Activated CD8-positive, alpha-beta T cell treated with anti-CD3 and anti-CD28 coated beads for 36 hours (primary cell): ENCODE measurements at regions of chr20 and their contacts with region 1.

Region 1: DNA sequence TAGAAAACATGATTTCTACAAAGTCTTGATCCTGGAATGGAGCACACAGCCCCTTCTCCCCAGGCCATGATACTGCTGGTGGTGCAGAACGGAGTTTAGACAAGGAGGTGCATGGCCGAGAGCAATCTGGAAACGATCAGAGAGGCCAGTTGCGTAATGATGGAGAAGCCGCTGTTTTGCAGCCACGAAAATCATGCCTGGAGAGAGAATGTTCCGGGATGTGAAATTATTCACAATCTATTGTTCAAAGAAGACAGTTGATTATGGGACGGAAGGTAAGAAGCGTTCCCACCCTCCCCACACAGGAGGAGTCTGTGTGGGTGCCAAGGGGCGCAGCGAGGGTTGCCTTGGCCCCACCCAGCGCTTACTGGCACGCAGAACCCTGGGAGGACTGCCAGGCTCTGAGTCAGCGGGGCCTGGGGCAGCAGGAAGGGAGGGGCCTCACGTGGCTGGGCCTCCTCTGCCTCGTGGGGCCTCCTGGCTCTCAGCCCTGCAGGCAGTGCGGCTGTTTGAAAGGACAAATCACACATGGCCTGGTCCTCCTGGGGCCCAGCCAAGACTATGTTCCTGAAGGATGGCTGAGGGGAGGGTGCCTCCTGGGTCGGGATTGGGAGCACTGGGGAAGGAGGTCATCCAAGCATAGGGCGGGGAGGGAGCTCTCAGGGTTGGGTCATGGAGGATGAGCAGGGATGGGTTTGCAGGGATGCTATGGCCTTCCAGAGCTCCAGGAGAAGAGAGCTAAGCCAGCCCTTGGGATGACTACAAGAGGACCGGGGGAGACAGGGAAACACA is 8.7 kb upstream of the AP5S1 start:
- DNase-seq: peak; percentile 95
- ATAC-seq: peak; percentile 88
- H3K4me3 Mint-ChIP-seq: peak overlapping the region; percentile 74
- H3K27ac Mint-ChIP-seq: peak overlapping the region; percentile 94
- H3K4me1 Mint-ChIP-seq: peaks cover 69% of the 10 kb centered on the region
- H3K27me3 Mint-ChIP-seq: no peaks in the 10 kb centered on the region
- CTCF ChIP-seq: no peak

Region 2: DNA sequence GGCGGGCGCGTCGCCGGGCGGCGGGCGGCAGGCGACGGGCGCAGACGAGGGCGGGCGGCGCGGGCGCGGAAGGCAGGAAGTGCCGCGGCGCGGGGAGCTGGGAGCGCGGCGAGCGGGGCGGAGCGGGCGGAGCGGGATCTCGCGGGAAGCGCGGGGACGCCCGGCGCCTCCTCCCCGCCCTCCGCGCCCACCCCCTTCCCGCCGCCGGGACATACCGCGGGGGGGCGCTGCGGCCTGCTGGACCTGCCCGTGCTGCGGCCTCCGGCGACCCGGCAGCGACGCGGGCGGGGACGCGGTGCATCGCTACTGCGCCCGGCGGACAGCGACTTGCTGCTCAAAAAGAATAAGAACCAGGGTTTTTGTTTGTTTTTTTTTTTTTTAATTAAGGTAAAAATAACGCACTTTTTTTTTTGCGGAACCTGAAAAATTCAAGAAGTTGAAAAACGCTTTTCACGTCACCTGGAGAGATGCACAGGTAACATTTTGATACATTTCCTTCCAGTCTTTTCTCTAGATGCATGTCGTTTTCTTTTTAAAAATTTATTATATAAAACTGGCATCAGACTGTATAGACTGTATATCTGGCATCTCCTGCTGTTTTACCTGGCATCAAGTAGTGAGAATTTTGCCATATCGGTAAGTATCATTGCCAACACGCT is 24.9 kb before region 1 on chr20 and contains the start of gene CENPB:
- CTCF ChIA-PET with region 1: interaction called, 25 read pairs
- POLR2A ChIA-PET with region 1: interaction called, 31 read pairs
- intact Hi-C with region 1: no loop called
- DNase-seq: peak; percentile 89
- ATAC-seq: peak; percentile 92
- H3K4me3 Mint-ChIP-seq: peak within 1 kb of the TSS; percentile 80
- H3K27ac Mint-ChIP-seq: peak within 1 kb of the TSS; percentile 85
- H3K4me1 Mint-ChIP-seq: peaks cover 37% of the 10 kb centered on the region
- H3K27me3 Mint-ChIP-seq: no peaks in the 10 kb centered on the region
- CTCF ChIP-seq: peak; percentile 95
- total RNA-seq, gene CENPB: 35.0 to 35.4 TPM

Region 3: GRCh38 chr20:3795511-3796468 is 15.9 kb before region 1 on chr20 and contains the start of gene CDC25B:
- CTCF ChIA-PET with region 1: interaction called, 6 read pairs
- POLR2A ChIA-PET with region 1: interaction called, 42 read pairs
- intact Hi-C with region 1: no loop called
- DNase-seq: peak; percentile 96
- ATAC-seq: peak; percentile 78
- H3K4me3 Mint-ChIP-seq: peak within 1 kb of the TSS; percentile 99
- H3K27ac Mint-ChIP-seq: peak within 1 kb of the TSS; percentile 99
- H3K4me1 Mint-ChIP-seq: peaks cover 44% of the 10 kb centered on the region
- H3K27me3 Mint-ChIP-seq: no peaks in the 10 kb centered on the region
- CTCF ChIP-seq: peak; percentile 38
- total RNA-seq, gene CDC25B: 66.9 to 67.1 TPM

Region 4: DNA sequence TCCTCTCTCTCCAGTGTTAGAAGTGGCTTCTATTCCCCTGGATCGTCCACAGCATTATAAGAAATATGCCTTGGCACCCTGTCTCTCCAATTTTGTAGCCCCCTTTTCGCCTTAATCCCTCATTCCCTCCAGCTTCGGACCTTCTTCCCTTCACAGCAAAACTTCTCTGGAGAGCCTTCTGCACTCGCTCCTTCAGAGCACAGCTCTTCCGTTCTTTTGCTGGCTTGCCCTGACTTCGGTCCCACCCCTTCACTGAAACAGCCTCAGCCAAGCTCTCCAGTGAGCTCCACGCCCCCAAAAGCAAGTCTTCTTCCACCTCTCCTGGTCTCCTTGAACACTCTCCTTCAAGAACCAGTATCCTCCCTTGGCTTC is 338.4 kb after region 1 on chr20:
- CTCF ChIA-PET with region 1: no interaction called
- POLR2A ChIA-PET with region 1: no interaction called
- intact Hi-C with region 1: no loop called
- DNase-seq: no peak
- ATAC-seq: no peak
- H3K4me3 Mint-ChIP-seq: peak overlapping the region; percentile 51
- H3K27ac Mint-ChIP-seq: no peak overlapping the region
- H3K4me1 Mint-ChIP-seq: peaks cover 4% of the 10 kb centered on the region
- H3K27me3 Mint-ChIP-seq: peaks cover 38% of the 10 kb centered on the region
- CTCF ChIP-seq: no peak